ENCODE measurements at regions of chr2 and their contacts with region 1.

Region 1: GRCh38 chr2:199488772-199489400 is 31.1 kb upstream of the SATB2 start:
- DNase-seq: peak; percentile 58
- H3K4me3 Mint-ChIP-seq: no peak overlapping the region
- H3K27ac Mint-ChIP-seq: no peak overlapping the region
- H3K4me1 Mint-ChIP-seq: no peaks in the 10 kb centered on the region
- H3K27me3 Mint-ChIP-seq: peaks cover 23% of the 10 kb centered on the region

Region 2: GRCh38 chr2:198309673-198310280 is 1179.1 kb before region 1 on chr2:
- CTCF ChIA-PET with region 1: interaction called, 61 read pairs
- POLR2A ChIA-PET with region 1: no interaction called
- intact Hi-C with region 1: loop called (anchors 2 kb)
- DNase-seq: peak; percentile 65
- H3K4me3 Mint-ChIP-seq: no peak overlapping the region
- H3K27ac Mint-ChIP-seq: no peak overlapping the region
- H3K4me1 Mint-ChIP-seq: no peaks in the 10 kb centered on the region
- H3K27me3 Mint-ChIP-seq: peaks cover 21% of the 10 kb centered on the region

Region 3: GRCh38 chr2:198374375-198375082 is 1114.4 kb before region 1 on chr2:
- CTCF ChIA-PET with region 1: interaction called, 5 read pairs
- POLR2A ChIA-PET with region 1: no interaction called
- intact Hi-C with region 1: loop called (anchors 5 kb)
- DNase-seq: peak; percentile 35
- H3K4me3 Mint-ChIP-seq: no peak overlapping the region
- H3K27ac Mint-ChIP-seq: no peak overlapping the region
- H3K4me1 Mint-ChIP-seq: peaks cover 9% of the 10 kb centered on the region
- H3K27me3 Mint-ChIP-seq: peaks cover 32% of the 10 kb centered on the region

Region 4: GRCh38 chr2:199471443-199472057 is 17.3 kb before region 1 on chr2:
- CTCF ChIA-PET with region 1: interaction called, 15 read pairs
- POLR2A ChIA-PET with region 1: no interaction called
- intact Hi-C with region 1: no loop called
- DNase-seq: peak; percentile 57
- H3K4me3 Mint-ChIP-seq: no peak overlapping the region
- H3K27ac Mint-ChIP-seq: no peak overlapping the region
- H3K4me1 Mint-ChIP-seq: peaks cover 10% of the 10 kb centered on the region
- H3K27me3 Mint-ChIP-seq: peaks cover 76% of the 10 kb centered on the region

Region 5: DNA sequence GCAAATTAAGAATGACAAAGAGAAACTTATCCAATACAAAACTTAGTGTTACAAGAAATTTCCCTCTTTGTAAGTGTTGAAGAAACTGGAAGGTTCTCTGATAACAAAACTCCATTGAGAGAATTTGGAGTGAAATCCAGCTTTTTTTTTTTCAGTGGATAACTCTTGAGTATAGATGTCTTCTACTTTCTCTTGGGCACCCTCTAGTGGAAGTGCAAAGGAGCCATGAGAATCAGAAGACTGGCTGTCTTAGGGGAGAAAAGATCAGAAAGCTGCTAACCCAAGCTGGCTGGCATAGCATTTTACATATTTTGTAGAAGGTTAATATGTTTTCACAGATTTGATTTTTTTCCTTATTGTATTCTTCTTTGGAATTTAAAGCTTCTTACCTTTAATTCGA is 107.7 kb after region 1 on chr2:
- CTCF ChIA-PET with region 1: no interaction called
- POLR2A ChIA-PET with region 1: no interaction called
- intact Hi-C with region 1: no loop called
- DNase-seq: no peak
- H3K4me3 Mint-ChIP-seq: no peak overlapping the region
- H3K27ac Mint-ChIP-seq: no peak overlapping the region
- H3K4me1 Mint-ChIP-seq: no peaks in the 10 kb centered on the region
- H3K27me3 Mint-ChIP-seq: no peaks in the 10 kb centered on the region